Endothelial cell of umbilical vein (primary cell): ENCODE measurements at regions of chr6 and their contacts with region 1.

Region 1: DNA sequence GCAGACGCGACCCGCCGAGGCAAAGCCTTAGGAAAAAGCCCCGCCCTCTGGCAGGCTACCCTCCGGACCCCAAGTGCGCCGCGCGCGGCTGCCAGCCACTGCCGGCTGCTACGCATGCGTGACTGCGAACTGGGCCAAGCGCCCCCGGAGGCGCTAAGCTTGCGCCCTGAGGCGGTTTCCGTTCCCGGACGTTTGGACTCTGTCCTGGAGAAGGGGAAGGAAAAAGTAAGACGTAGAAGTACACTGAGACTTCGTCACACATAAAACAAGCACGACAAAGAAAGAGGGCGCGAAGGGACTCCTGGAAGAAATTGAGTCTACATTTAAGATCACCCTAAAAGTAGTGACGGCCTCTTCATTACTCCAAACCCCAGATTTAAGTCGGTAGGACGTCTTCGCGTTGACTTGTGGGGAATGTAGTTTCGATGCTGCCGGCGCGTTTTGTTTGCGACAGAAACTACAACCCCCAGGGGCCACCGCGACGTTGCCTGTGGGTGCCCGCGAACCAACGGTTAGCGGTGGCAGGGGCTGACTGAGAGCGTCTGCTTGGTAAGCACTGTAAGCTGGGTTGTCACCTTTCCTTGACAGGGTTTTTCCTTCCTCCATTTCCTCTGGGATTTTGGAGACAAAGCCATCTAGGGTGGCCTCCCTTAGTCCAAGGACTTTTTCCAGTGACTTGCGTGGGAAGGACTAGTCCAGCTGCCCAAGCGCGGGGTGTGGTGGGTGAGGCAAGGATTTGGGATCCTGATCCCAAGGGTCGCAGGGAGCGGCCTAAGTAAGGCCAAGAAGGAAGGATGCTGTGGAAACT is at the start of gene CEP57L1:
- DNase-seq: peak; percentile 99
- H3K4me3 ChIP-seq: peak within 1 kb of the TSS; percentile 68 to 100 (median 100)
- H3K27ac ChIP-seq: peak within 1 kb of the TSS; percentile 92
- H3K4me1 ChIP-seq: peaks cover 27% of the 10 kb centered on the region
- H3K27me3 ChIP-seq: no peaks in the 10 kb centered on the region
- CTCF ChIP-seq: peak in 1 of 2 donors; percentile 25
- POLR2A ChIP-seq: peak; percentile 87
- total RNA-seq, gene CEP57L1: 20.9 and 21.0 TPM in 2 replicates

Region 2: DNA sequence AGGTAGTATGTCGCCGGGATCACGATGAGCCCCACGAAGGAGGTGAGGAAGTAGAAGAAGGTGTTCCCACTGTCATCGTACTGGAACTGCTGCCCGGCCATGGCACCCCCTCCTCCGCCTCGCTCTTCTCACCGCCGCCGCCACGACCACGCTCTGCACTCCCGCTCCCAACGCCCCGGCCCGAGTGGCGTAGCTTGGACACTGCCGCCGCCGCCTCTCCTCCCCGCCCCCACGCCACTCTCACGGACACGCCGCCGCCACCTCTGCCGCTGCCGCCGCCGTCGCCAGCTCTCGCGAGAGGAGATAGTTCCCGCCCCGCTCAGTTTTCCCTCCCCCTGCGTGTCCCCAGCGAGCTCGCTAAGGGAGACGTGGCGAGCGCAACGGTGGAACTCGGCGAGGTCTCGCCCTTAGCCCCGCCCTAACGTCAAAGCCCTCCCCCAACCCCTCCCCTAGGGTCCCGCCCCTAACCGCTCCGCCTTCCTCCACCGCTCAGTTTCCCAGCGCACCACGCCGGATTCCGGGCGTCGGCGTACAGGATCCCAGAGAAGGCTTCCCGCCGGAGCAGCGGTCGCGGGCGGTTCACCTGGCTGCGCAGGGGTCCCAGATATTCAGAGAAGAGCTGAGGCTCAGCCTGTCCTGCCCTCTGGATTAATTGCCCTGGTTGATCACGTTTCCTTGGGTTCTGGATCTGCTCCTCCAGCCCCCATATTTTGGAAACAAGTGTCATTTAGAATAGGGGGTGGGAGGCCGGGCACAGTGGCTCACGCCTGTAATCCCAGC is 1137.1 kb before region 1 on chr6 and contains the start of gene SEC63:
- CTCF ChIA-PET with region 1: no interaction called
- POLR2A ChIA-PET with region 1: no interaction called
- dilution Hi-C with region 1: no loop called
- intact Hi-C with region 1: loop called (anchors 2 kb)
- DNase-seq: peak; percentile 97
- H3K4me3 ChIP-seq: peak within 1 kb of the TSS; percentile 79 to 94 (median 93)
- H3K27ac ChIP-seq: peak within 1 kb of the TSS; percentile 91
- H3K4me1 ChIP-seq: peaks cover 10% of the 10 kb centered on the region
- H3K27me3 ChIP-seq: no peaks in the 10 kb centered on the region
- CTCF ChIP-seq: no peak
- POLR2A ChIP-seq: peak; percentile 82
- total RNA-seq, gene SEC63: 111 and 132 TPM in 2 replicates

Region 3: GRCh38 chr6:108250240-108250866 is 844.9 kb before region 1 on chr6:
- CTCF ChIA-PET with region 1: no interaction called
- POLR2A ChIA-PET with region 1: no interaction called
- dilution Hi-C with region 1: no loop called
- intact Hi-C with region 1: loop called (anchors 10 kb)
- DNase-seq: peak; percentile 37
- H3K4me3 ChIP-seq: no peak overlapping the region
- H3K27ac ChIP-seq: no peak overlapping the region
- H3K4me1 ChIP-seq: peaks cover 14% of the 10 kb centered on the region
- H3K27me3 ChIP-seq: no peaks in the 10 kb centered on the region
- CTCF ChIP-seq: peak in 1 of 2 donors; percentile 23
- POLR2A ChIP-seq: no peak

Region 4: GRCh38 chr6:109009236-109009961 is 85.8 kb before region 1 on chr6:
- CTCF ChIA-PET with region 1: no interaction called
- POLR2A ChIA-PET with region 1: no interaction called
- dilution Hi-C with region 1: no loop called
- intact Hi-C with region 1: loop called (anchors 1 kb)
- DNase-seq: peak; percentile 86
- H3K4me3 ChIP-seq: peak overlapping the region; percentile 63 to 95 (median 92)
- H3K27ac ChIP-seq: peak overlapping the region; percentile 41
- H3K4me1 ChIP-seq: peaks cover 6% of the 10 kb centered on the region
- H3K27me3 ChIP-seq: no peaks in the 10 kb centered on the region
- CTCF ChIP-seq: no peak
- POLR2A ChIP-seq: peak; percentile 75

Region 5: GRCh38 chr6:109059571-109060021 is 35.6 kb before region 1 on chr6:
- CTCF ChIA-PET with region 1: no interaction called
- POLR2A ChIA-PET with region 1: no interaction called
- dilution Hi-C with region 1: no loop called
- intact Hi-C with region 1: loop called (anchors 1 kb)
- DNase-seq: peak; percentile 95
- H3K4me3 ChIP-seq: no peak overlapping the region
- H3K27ac ChIP-seq: peak overlapping the region; percentile 78
- H3K4me1 ChIP-seq: peaks cover 25% of the 10 kb centered on the region
- H3K27me3 ChIP-seq: no peaks in the 10 kb centered on the region
- CTCF ChIP-seq: peak; percentile 10 to 21
- POLR2A ChIP-seq: no peak

Region 6: GRCh38 chr6:109440331-109441068 is 345.3 kb after region 1 on chr6 and contains the starts of genes PPIL6 and SMPD2:
- CTCF ChIA-PET with region 1: interaction called, 4 read pairs
- POLR2A ChIA-PET with region 1: interaction called, 4 read pairs
- dilution Hi-C with region 1: no loop called
- intact Hi-C with region 1: loop called (anchors 2 kb)
- DNase-seq: peak; percentile 86
- H3K4me3 ChIP-seq: peak within 1 kb of the TSS; percentile 62 to 73 (median 66)
- H3K27ac ChIP-seq: peak within 1 kb of the TSS; percentile 59
- H3K4me1 ChIP-seq: peaks cover 3% of the 10 kb centered on the region
- H3K27me3 ChIP-seq: no peaks in the 10 kb centered on the region
- CTCF ChIP-seq: peak in 1 of 2 donors; percentile 41
- POLR2A ChIP-seq: no peak
- total RNA-seq, gene PPIL6: 0.25 and 0.33 TPM in 2 replicates
- total RNA-seq, gene SMPD2: 6.9 and 8.5 TPM in 2 replicates

Region 7: DNA sequence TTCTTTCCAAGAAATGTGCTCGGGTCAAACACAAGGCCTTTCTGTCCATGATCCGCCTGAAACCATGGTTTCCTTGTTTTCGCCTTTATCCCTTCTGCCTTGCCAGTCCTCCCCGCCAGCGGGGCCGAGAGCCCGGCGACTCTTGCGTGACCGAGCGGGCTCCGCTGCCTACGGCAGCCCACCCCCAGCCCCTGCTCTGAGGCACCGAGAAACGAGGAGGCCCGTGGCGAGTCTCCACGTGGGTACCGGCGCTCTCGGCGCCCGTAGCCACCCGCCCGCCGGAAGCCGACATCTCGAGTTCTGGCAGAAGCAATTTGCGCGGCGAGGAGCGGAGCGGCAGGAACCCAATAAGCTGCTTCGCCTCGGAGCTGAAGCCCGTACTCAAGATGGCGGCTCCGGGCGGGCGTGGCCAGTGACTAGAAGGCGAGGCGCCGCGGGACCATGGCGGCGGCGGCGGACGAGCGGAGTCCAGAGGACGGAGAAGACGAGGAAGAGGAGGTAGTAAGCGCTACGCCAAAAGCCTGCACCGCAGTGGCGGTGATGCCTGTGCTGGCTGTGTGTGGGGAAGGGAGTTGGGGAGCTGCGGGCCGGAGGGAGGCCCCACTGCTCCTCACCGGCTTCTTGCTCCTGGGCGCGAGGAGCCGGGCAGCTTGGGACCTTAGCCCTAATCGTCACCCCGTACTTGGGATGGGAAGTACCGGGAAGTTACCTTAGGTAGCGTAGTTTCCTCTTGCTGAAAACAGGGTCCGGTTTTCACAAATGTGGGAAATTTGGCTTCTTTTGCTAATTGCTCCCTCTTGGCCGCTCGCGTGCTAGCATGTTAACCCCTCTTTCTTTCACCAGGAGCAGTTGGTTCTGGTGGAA is 1863.3 kb after region 1 on chr6 and contains the start of gene GTF3C6:
- CTCF ChIA-PET with region 1: no interaction called
- POLR2A ChIA-PET with region 1: no interaction called
- dilution Hi-C with region 1: no loop called
- intact Hi-C with region 1: loop called (anchors 10 kb)
- DNase-seq: peak; percentile 93
- H3K4me3 ChIP-seq: peak within 1 kb of the TSS; percentile 76 to 94 (median 86)
- H3K27ac ChIP-seq: peak within 1 kb of the TSS; percentile 94
- H3K4me1 ChIP-seq: peaks cover 6% of the 10 kb centered on the region
- H3K27me3 ChIP-seq: peaks cover 0 to 2% of the 10 kb centered on the region in 2 experiments
- CTCF ChIP-seq: no peak
- POLR2A ChIP-seq: peak; percentile 97
- total RNA-seq, gene GTF3C6: 88.1 and 96.4 TPM in 2 replicates